ENCODE measurements at regions of chr2 and their contacts with region 1.

Region 1: GRCh38 chr2:38581193-38582147 is 21.3 kb downstream of the HNRNPLL start:
- H3K4me3 ChIP-seq: no peak overlapping the region
- H3K27ac ChIP-seq: no peak overlapping the region
- H3K4me1 ChIP-seq: peaks cover 16% of the 10 kb centered on the region
- CTCF ChIP-seq: 0 out of 2 replicates have a peak, but pooled peaks have one; percentile 19

Region 2: DNA sequence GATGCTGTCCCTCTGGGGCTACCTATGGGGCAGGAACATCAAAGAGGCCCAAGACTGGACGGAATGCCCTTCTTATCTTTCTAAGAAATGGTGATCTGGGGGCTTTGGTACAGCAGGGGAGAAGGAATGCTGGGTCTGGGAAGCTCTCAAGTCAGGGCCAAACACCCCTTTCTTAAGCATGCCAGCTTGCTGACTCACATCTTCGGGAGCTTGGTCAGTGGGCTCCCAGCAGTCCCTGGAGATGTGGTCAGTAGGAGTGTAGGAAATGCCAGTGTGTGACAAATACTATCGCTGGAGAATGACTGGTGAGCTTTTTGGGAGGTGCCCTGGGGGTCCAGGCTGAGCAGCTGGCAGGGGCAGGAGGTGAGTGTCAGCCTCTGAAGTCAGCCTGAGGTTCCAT is 805.0 kb before region 1 on chr2:
- CTCF ChIA-PET with region 1: no interaction called
- POLR2A ChIA-PET with region 1: no interaction called
- H3K4me3 ChIP-seq: no peak overlapping the region
- H3K27ac ChIP-seq: no peak overlapping the region
- H3K4me1 ChIP-seq: no peaks in the 10 kb centered on the region; the same call in 1 of the 2 replicates
- CTCF ChIP-seq: no peak

Region 3: GRCh38 chr2:38515160-38516074 is 66.1 kb before region 1 on chr2:
- CTCF ChIA-PET with region 1: no interaction called
- POLR2A ChIA-PET with region 1: no interaction called
- H3K4me3 ChIP-seq: peak overlapping the region; percentile 8
- H3K27ac ChIP-seq: peak overlapping the region; percentile 61
- H3K4me1 ChIP-seq: peaks cover 4% of the 10 kb centered on the region
- CTCF ChIP-seq: no peak

Region 4: DNA sequence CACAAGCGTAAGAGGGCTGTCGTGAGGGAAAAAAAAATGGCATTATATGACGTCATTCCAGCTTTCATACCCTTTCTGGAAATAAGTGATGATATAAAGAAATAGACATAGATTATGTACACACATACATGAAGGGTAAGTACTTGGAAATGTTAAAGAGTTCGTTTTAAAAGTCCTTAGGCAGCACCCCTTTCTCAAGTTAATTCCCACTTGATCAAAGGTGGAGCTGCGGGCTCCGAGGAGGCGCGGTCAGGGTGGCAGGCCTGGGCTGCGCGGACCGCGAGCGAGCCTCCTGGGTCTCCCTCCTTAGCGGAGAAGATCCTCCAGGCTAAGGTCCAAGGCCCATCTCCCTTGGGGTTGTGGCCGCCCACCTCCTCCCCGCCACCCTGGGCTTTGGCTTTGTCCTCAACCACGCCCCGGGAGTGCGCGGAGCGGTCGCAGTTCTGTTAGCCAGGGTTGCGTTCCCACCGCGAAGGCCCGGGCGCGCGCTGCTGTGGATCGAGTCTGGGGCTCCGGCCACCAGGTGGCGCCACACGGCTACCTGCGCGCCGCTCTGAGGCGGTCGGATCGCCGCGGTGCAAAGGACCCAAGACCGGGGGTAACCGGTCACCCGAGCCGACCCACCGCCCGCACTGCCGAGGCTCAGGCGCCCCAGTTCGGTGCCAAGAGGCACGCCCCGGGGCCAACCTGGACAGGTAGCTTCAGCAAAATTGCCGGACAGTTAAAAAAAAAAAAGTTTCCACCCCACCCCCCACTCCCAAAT is 45.5 kb before region 1 on chr2:
- CTCF ChIA-PET with region 1: interaction called, 14 read pairs
- POLR2A ChIA-PET with region 1: no interaction called
- H3K4me3 ChIP-seq: peak overlapping the region; percentile 46
- H3K27ac ChIP-seq: peak overlapping the region; percentile 24; the same call in 1 of the 2 replicates
- H3K4me1 ChIP-seq: peaks cover 4% of the 10 kb centered on the region
- CTCF ChIP-seq: peak; percentile 94

Region 5: GRCh38 chr2:38561691-38562090 is 19.8 kb before region 1 on chr2:
- CTCF ChIA-PET with region 1: interaction called, 40 read pairs
- POLR2A ChIA-PET with region 1: no interaction called
- H3K4me3 ChIP-seq: no peak overlapping the region
- H3K27ac ChIP-seq: no peak overlapping the region
- H3K4me1 ChIP-seq: no peaks in the 10 kb centered on the region
- CTCF ChIP-seq: no peak

Region 6: DNA sequence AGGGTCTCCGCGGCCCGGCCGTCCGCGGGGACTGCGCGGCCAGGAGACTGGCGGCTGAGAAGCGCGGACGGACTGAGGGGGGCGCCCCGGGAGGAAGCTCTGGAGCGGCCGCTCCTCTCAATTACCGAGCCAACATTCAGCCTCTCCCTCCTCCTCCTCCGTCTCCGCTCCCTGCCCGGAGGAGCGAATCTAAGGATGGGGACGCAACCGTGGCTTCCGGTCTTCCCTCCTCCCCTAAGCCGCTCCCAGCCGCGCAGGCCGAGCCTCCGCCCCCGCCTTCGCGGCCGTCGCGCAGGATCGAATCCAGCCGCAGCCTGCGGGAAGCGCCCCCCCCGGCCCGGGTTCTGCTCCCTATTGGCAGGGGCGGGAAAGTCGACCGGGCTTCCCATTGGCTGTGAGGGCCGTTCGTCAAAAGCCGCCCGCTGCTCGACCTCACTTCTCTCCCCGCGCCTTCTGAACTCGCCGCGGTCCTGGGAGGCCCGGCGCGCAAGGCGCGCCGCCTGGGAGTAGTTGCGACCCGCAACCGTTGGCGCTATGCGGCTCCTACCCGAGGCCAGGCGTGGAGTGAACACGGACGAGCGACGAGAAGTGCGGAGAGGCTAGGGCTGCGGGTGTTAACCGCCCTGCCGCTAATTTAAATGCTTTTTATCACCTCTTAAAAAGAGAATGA is 21.4 kb after region 1 on chr2 and contains the start of gene HNRNPLL:
- CTCF ChIA-PET with region 1: interaction called, 47 read pairs
- POLR2A ChIA-PET with region 1: interaction called, 10 read pairs
- H3K4me3 ChIP-seq: peak within 1 kb of the TSS; percentile 87
- H3K27ac ChIP-seq: peak within 1 kb of the TSS; percentile 97
- H3K4me1 ChIP-seq: peaks cover 23% of the 10 kb centered on the region; the same call in 1 of the 2 replicates
- CTCF ChIP-seq: peak; percentile 17; the same call in 1 of the 2 replicates

Region 7: DNA sequence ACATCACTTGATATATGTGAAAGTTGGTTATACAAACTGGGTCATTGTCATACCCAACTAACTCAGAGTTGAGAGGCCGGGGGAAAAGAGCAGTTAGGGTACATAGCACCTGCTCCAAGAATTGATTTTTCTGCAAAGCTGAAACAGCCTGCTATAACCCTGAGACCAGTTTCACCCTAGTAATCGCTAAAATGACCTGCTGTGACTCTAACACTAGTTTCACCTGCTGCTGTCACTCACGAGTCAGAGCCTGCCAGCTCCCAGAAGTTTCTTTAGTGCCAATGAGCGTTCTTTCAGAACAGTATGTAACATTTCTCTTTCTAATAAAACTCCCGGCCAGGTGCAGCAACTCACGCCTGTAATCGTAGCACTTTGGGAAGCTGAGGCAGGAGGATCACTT is 141.7 kb after region 1 on chr2:
- CTCF ChIA-PET with region 1: interaction called, 25 read pairs
- POLR2A ChIA-PET with region 1: no interaction called
- H3K4me3 ChIP-seq: no peak overlapping the region
- H3K27ac ChIP-seq: no peak overlapping the region
- H3K4me1 ChIP-seq: no peaks in the 10 kb centered on the region
- CTCF ChIP-seq: no peak

Region 8: GRCh38 chr2:38734299-38735058 is 153.0 kb after region 1 on chr2:
- CTCF ChIA-PET with region 1: interaction called, 12 read pairs
- POLR2A ChIA-PET with region 1: no interaction called
- H3K4me3 ChIP-seq: no peak overlapping the region
- H3K27ac ChIP-seq: no peak overlapping the region
- H3K4me1 ChIP-seq: no peaks in the 10 kb centered on the region
- CTCF ChIP-seq: no peak

Region 9: GRCh38 chr2:38835015-38835601 is 253.6 kb after region 1 on chr2:
- CTCF ChIA-PET with region 1: interaction called, 11 read pairs
- POLR2A ChIA-PET with region 1: interaction called, 5 read pairs
- H3K4me3 ChIP-seq: no peak overlapping the region
- H3K27ac ChIP-seq: no peak overlapping the region
- H3K4me1 ChIP-seq: no peaks in the 10 kb centered on the region
- CTCF ChIP-seq: no peak

Region 10: GRCh38 chr2:39107156-39107555 is 525.7 kb after region 1 on chr2:
- CTCF ChIA-PET with region 1: no interaction called
- POLR2A ChIA-PET with region 1: no interaction called
- H3K4me3 ChIP-seq: no peak overlapping the region
- H3K27ac ChIP-seq: no peak overlapping the region
- H3K4me1 ChIP-seq: peaks cover 10% of the 10 kb centered on the region; the same call in 1 of the 2 replicates
- CTCF ChIP-seq: no peak